ENCODE measurements at regions of chr9 and their contacts with region 1.

Region 1: DNA sequence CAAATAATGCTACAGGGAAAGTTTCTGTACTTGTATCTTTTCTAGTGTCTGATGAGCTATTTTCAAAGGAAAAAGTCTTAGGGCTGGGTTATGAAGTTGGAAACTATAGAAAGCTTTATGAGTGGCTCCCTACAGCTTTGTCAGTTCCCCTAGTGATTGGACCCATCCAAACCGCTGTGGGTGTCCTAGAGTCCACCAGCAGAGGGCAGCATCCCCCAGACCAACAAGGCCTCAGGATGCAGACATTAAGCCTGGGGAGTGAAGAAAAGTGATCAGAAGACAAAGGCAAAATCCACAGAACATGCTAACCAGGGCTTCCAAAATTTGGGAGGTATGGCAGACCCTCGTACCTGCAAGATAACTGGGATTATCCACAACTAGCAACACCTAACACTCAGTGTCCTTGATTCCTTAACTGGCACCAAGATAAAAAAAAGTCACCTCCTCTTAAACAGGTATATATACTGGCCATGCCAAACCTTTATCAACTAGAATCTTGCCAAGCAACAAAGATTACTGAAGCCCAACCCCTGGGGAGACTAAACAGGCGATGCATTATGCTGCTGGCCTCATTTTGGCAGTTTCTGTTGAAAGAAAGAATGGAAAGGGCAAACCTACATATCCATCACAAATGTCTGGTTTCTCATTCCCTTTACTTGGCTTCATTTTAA is 110.4 kb upstream of the NR5A1 start:
- DNase-seq: peak; percentile 76
- ATAC-seq: peak; percentile 61
- H3K4me3 ChIP-seq: no peak overlapping the region
- H3K4me3 Mint-ChIP-seq: no peak overlapping the region
- H3K27ac ChIP-seq: no peak overlapping the region
- H3K27ac Mint-ChIP-seq: no peak overlapping the region
- H3K4me1 ChIP-seq: no peaks in the 10 kb centered on the region
- H3K4me1 Mint-ChIP-seq: no peaks in the 10 kb centered on the region
- H3K27me3 ChIP-seq: no peaks in the 10 kb centered on the region
- H3K27me3 Mint-ChIP-seq: no peaks in the 10 kb centered on the region
- CTCF ChIP-seq: peak; percentile 84

Region 2: GRCh38 chr9:124606027-124606426 is 11.6 kb before region 1 on chr9:
- CTCF ChIA-PET with region 1: interaction called, 12 read pairs
- POLR2A ChIA-PET with region 1: no interaction called
- intact Hi-C with region 1: no loop called
- DNase-seq: no peak
- ATAC-seq: no peak
- H3K4me3 ChIP-seq: no peak overlapping the region
- H3K4me3 Mint-ChIP-seq: no peak overlapping the region
- H3K27ac ChIP-seq: no peak overlapping the region
- H3K27ac Mint-ChIP-seq: no peak overlapping the region
- H3K4me1 ChIP-seq: no peaks in the 10 kb centered on the region
- H3K4me1 Mint-ChIP-seq: no peaks in the 10 kb centered on the region
- H3K27me3 ChIP-seq: no peaks in the 10 kb centered on the region
- H3K27me3 Mint-ChIP-seq: no peaks in the 10 kb centered on the region
- CTCF ChIP-seq: no peak

Region 3: GRCh38 chr9:125374443-125375309 is 757.1 kb after region 1 on chr9:
- CTCF ChIA-PET with region 1: no interaction called
- POLR2A ChIA-PET with region 1: no interaction called
- intact Hi-C with region 1: loop called (anchors 1 kb)
- DNase-seq: peak; percentile 75
- ATAC-seq: peak; percentile 91
- H3K4me3 ChIP-seq: peak overlapping the region in 3 of 5 experiments; percentile 15 to 38 (median 15)
- H3K4me3 Mint-ChIP-seq: peak overlapping the region; percentile 66
- H3K27ac ChIP-seq: no peak overlapping the region
- H3K27ac Mint-ChIP-seq: no peak overlapping the region
- H3K4me1 ChIP-seq: peaks cover 7 to 10% of the 10 kb centered on the region in 2 donors
- H3K4me1 Mint-ChIP-seq: peaks cover 7% of the 10 kb centered on the region
- H3K27me3 ChIP-seq: peaks cover 0 to 32% (median 3%) of the 10 kb centered on the region in 4 experiments
- H3K27me3 Mint-ChIP-seq: peaks cover 7% of the 10 kb centered on the region
- CTCF ChIP-seq: peak; percentile 77

Measured in B cell (primary cell).